AG04450 (cell line): ENCODE measurements at regions of chrX and their contacts with region 1.

Region 1: DNA sequence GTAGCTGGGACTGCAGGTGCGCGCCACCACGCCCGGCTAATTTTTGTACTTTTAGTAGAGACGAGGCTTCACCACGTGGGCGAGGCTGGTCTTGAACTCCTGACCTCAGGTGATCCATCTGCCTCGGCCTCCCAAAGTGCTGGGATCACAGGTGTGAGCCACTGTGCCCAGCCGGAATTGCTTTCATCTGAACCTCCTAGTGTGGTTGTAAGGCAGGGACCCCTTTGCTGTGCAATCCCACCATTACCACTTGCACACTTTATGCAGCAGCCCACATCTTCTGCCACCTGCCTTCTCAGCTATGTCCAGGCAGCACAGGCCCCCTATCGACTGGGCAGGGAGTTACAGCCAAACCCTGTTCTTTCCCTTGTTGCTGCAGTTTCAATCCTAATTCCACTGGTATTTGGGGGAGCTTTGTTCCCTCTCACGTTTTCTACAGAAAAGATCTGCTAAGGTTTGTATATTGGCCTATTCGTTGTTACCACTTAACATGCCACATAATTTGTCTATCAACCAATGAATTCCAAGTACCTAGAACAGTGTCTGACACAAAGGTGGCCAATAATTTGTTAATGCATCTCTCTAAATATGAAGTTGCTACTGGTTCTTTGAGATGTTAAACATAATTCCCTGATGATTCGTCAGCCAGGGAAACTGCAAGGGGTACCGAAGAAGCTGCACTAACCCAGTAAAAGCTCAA is 6.5 kb downstream of the RPL39 start:
- DNase-seq: no peak
- H3K4me3 ChIP-seq: no peak overlapping the region
- H3K27ac ChIP-seq: no peak overlapping the region
- H3K27me3 ChIP-seq: no peaks in the 10 kb centered on the region
- CTCF ChIP-seq: peak; percentile 59

Region 2: DNA sequence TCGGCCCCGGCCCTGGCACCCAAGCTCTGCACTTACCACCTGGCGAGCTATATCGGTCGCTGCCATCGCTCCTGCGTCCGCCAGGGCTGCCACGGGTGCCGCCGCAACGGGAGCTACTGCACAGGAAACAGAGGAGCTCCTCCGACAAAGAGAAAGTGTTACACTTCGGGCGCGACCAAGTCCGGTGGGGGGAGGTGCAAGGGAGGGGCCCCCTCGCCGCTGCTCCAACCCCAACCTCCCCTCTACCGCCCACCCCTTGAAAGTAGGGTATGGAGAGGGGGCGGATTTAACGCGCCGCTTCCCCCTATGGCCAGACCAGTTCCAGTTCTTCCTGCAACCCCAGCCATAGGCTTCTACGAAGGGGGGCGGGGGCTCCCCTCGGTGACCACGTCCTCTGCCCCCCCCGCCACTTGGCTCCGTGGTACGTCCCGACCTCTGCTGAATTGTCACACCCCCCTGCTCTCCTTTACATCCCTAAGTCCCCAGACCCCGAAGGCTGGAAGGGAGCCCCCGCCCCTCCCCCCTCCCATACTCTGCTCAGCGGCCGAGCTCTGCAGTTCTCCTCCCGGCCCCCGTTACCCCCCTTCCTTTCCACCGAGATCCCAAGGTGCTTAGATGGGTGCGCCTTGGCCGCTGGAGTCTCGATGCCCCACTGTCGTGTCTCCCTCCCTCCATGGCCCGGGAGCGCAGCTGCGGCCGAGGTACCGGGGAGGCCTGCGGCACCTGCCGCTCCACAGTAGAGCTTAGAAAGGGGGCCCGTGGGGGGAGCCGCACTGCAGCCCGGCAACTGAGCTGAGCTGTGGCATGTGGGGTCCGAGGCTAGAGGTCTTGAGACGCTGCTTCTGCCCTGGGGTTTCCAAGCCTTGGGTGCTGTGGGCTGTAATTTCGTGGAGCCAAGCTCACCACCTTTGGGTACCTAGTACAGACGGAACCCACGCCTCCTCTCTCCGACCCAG is 91.6 kb before region 1 on chrX and contains the start of gene SEPTIN6:
- CTCF ChIA-PET with region 1: interaction called, 3 read pairs
- POLR2A ChIA-PET with region 1: interaction called, 13 read pairs
- DNase-seq: no peak
- H3K4me3 ChIP-seq: peak within 1 kb of the TSS; percentile 67
- H3K27ac ChIP-seq: no peak within 1 kb of the TSS
- H3K27me3 ChIP-seq: no peaks in the 10 kb centered on the region
- CTCF ChIP-seq: no peak
- polyA plus RNA-seq, gene SEPTIN6: 34.4 and 37.0 TPM in 2 replicates

Region 3: DNA sequence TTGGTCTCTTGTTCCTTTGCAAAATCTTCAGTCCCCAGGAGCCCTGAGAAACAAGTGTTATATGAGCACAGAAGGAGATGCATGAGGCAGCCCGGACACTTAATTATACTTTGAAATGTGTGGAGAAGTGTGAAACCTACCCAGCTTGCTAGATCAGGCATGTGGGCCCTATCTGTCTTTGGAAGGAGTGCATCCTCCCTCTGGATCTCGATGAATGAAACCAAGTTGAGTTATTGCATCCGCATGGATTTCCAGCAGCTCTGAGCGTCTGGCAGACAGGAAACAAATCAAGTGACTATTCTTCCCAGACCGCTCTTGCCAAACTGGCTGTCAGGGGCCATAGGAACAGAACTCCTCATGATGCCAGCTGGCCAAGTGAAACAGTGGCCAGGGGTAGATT is 46.2 kb before region 1 on chrX:
- CTCF ChIA-PET with region 1: no interaction called
- POLR2A ChIA-PET with region 1: no interaction called
- DNase-seq: no peak
- H3K4me3 ChIP-seq: no peak overlapping the region
- H3K27ac ChIP-seq: no peak overlapping the region
- H3K27me3 ChIP-seq: peaks cover 3% of the 10 kb centered on the region
- CTCF ChIP-seq: no peak

Region 4: GRCh38 chrX:119809185-119809666 is 24.3 kb after region 1 on chrX:
- CTCF ChIA-PET with region 1: no interaction called
- POLR2A ChIA-PET with region 1: no interaction called
- DNase-seq: no peak
- H3K4me3 ChIP-seq: no peak overlapping the region
- H3K27ac ChIP-seq: no peak overlapping the region
- H3K27me3 ChIP-seq: no peaks in the 10 kb centered on the region
- CTCF ChIP-seq: no peak